Activated CD4-positive, alpha-beta memory T cell treated with anti-CD3 and anti-CD28 coated beads for 36 hours (primary cell): ENCODE measurements at regions of chr5 and their contacts with region 1.

Region 1: DNA sequence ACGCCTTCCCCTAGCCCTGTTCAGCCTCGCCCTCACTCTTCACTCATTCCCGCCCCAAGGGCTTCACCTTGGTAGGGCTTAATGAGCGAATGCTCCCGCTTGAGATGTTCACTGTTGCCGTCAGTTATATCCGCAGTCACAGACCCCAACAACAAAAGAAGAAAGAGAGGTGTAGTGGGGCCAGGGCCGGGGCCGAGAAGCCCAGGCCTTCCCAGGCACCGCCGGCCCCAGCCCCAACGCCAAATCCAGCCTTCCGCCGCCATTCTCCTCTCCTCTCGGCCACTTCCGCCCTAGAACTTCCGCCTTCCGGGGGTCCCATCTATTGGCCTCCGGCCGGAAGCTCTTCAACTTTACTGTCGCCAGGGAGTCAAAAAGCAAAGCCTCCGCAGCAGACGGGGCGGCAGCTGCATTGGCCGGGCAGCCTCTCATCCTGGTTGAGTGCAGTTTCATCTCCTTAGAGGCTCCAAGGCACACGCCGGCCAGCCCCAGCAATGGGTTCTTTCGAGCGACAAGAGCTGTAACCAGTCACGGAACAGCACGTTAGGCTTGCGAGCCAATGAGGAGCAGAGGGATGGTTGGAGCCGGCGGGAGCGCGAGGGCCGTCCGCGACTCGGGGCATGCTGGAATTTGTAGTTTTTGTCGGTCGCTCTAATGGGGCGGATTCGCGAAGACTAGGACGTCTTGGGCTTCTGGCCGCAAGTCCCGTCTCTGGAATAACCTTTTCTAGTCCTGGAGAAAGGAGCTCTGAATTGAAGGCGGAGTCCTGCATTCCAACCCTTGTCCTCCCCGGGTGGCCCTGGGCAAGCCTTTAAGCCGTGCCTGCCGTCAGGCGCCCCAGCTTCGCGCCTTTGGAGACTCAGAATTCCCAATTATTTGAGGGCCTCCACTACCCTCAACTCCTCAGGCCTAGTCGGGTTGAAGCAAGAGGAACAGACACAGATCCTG is at the start of gene LMAN2:
- DNase-seq: peak; percentile 95
- H3K4me3 Mint-ChIP-seq: peak within 1 kb of the TSS; percentile 96
- H3K27ac Mint-ChIP-seq: peak within 1 kb of the TSS; percentile 99
- H3K4me1 Mint-ChIP-seq: peaks cover 64% of the 10 kb centered on the region
- H3K27me3 Mint-ChIP-seq: no peaks in the 10 kb centered on the region
- total RNA-seq, gene LMAN2: 98.3 to 104 TPM

Region 2: DNA sequence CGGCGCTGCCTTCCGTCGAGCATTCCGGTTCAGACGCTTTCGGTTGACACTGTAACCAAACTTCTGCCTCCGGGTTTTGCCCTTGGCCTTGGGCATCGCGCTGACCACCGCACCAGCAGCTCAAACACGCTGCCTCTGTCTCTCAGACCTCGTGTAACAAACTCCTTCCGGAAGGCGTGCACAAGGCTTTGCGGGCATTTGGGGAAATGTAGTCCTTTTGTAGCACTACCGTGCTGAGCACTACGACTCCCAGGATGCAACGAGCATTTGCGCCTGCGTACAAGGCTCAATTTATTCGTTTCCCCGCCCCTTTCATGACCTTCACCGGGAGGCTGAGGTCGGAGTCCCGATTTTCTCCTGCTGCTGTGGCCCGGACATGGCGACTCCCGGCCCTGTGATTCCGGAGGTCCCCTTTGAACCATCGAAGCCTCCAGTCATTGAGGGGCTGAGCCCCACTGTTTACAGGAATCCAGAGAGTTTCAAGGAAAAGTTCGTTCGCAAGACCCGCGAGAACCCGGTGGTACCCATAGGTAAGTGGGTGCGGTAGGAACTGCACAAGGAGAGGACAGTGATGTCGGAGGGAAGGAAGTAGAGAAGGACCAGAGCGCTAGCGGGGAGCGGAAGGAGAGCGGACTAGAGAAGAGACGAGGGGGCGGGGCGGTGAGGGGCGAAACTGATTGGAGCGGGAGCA is 963.1 kb before region 1 on chr5 and contains the starts of genes HIGD2A and NOP16:
- CTCF ChIA-PET with region 1: no interaction called
- POLR2A ChIA-PET with region 1: no interaction called
- intact Hi-C with region 1: loop called (anchors 5 kb)
- DNase-seq: peak; percentile 100
- H3K4me3 Mint-ChIP-seq: peak within 1 kb of the TSS; percentile 99
- H3K27ac Mint-ChIP-seq: peak within 1 kb of the TSS; percentile 98
- H3K4me1 Mint-ChIP-seq: peaks cover 27% of the 10 kb centered on the region
- H3K27me3 Mint-ChIP-seq: no peaks in the 10 kb centered on the region
- total RNA-seq, gene HIGD2A: 112 to 119 TPM
- total RNA-seq, gene NOP16: 52.5 to 57.6 TPM

Region 3: GRCh38 chr5:177133091-177133852 is 218.4 kb before region 1 on chr5 and contains the start of gene NSD1:
- CTCF ChIA-PET with region 1: no interaction called
- POLR2A ChIA-PET with region 1: no interaction called
- intact Hi-C with region 1: loop called (anchors 5 kb)
- DNase-seq: peak; percentile 93
- H3K4me3 Mint-ChIP-seq: peak within 1 kb of the TSS; percentile 90
- H3K27ac Mint-ChIP-seq: peak within 1 kb of the TSS; percentile 89
- H3K4me1 Mint-ChIP-seq: peaks cover 46% of the 10 kb centered on the region
- H3K27me3 Mint-ChIP-seq: no peaks in the 10 kb centered on the region
- total RNA-seq, gene NSD1: 54.6 to 55.5 TPM

Region 4: DNA sequence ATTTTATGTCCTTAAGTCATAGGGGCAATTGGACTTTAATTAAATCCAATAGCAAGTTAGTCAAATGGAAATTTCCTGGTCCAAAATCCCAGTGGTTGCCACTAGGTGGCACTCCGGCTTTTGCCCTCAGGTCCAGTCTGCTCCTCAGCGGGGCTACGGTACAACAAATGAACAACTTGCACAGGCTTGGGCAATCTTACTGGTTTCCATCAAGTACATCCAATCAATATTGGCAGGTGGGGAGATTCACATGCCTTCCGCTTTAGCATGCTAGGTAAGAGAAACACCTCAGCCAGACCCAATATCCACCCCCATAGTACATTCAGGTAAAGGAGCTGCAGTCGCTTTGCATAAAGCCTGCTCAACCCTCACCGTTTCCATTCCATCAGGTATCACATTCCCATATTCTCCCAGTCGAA is 33.7 kb before region 1 on chr5:
- CTCF ChIA-PET with region 1: interaction called, 15 read pairs
- POLR2A ChIA-PET with region 1: interaction called, 3 read pairs
- intact Hi-C with region 1: loop called (anchors 2 kb)
- DNase-seq: peak; percentile 86
- H3K4me3 Mint-ChIP-seq: no peak overlapping the region
- H3K27ac Mint-ChIP-seq: no peak overlapping the region
- H3K4me1 Mint-ChIP-seq: peaks cover 15% of the 10 kb centered on the region
- H3K27me3 Mint-ChIP-seq: no peaks in the 10 kb centered on the region

Region 5: GRCh38 chr5:177362610-177363507 is 11.2 kb after region 1 on chr5:
- CTCF ChIA-PET with region 1: interaction called, 5 read pairs
- POLR2A ChIA-PET with region 1: interaction called, 10 read pairs
- intact Hi-C with region 1: no loop called
- DNase-seq: peak; percentile 82
- H3K4me3 Mint-ChIP-seq: peak overlapping the region; percentile 69
- H3K27ac Mint-ChIP-seq: peak overlapping the region; percentile 51
- H3K4me1 Mint-ChIP-seq: peaks cover 73% of the 10 kb centered on the region
- H3K27me3 Mint-ChIP-seq: no peaks in the 10 kb centered on the region

Region 6: GRCh38 chr5:177370488-177371119 is 18.9 kb after region 1 on chr5:
- CTCF ChIA-PET with region 1: interaction called, 55 read pairs
- POLR2A ChIA-PET with region 1: interaction called, 10 read pairs
- intact Hi-C with region 1: no loop called
- DNase-seq: peak; percentile 79
- H3K4me3 Mint-ChIP-seq: peak overlapping the region; percentile 74
- H3K27ac Mint-ChIP-seq: peak overlapping the region; percentile 38
- H3K4me1 Mint-ChIP-seq: peaks cover 65% of the 10 kb centered on the region
- H3K27me3 Mint-ChIP-seq: no peaks in the 10 kb centered on the region